Activated CD4-positive, alpha-beta memory T cell treated with anti-CD3 and anti-CD28 coated beads, Interleukin-2, amount 10 ng/mL, durations not matched to agents 7 days and 5 days (primary cell): ENCODE measurements at regions of chr17 and their contacts with region 1.

Region 1: DNA sequence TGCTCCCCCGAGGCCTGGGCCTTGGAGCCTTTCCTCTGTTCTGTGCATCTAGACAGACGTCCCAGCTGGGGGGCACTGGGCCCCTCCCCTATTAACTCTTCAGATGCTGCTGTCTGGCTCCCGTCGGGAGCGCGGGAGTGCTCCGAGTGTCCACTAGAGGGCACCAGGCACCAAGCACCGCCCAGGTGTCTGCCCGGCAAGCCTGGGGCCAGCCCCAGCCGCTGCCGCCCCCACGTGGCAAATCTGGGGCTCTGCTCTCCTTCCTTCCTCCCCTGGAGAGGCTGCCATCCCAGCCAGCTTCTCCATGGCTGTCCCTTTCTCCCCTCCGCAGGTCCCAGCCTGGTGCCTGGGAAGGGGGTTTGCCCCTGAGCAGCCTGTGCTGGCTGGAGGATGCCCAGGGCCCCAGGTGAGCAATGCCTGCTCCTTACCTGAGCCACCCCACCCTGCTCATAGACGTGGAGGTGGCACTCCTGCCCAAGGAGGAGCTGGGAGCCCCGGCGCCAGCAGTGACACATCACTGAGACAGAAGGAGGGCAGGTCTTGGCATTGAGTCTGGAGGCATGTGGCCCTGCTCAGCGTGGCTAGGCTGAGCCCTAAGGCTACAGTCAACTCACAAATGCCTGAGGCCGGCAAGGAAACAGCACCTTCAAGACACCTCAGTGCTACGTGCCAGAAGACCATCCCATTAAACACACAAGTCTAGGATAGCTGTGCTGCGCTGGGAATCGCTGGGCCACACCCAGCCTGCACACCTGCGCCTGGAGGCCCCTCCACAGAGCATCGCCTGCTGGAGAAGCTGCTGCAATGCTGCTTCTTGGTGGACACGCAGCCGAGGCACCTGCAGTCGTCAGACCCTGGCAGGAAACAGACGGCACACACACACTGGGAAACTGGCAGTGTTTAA is 19.7 kb downstream of the TMEM235 start:
- DNase-seq: peak; percentile 89
- H3K4me3 Mint-ChIP-seq: peak overlapping the region; percentile 75
- H3K27ac Mint-ChIP-seq: peak overlapping the region; percentile 79
- H3K4me1 Mint-ChIP-seq: peaks cover 48% of the 10 kb centered on the region
- H3K27me3 Mint-ChIP-seq: peaks cover 4% of the 10 kb centered on the region

Region 2: DNA sequence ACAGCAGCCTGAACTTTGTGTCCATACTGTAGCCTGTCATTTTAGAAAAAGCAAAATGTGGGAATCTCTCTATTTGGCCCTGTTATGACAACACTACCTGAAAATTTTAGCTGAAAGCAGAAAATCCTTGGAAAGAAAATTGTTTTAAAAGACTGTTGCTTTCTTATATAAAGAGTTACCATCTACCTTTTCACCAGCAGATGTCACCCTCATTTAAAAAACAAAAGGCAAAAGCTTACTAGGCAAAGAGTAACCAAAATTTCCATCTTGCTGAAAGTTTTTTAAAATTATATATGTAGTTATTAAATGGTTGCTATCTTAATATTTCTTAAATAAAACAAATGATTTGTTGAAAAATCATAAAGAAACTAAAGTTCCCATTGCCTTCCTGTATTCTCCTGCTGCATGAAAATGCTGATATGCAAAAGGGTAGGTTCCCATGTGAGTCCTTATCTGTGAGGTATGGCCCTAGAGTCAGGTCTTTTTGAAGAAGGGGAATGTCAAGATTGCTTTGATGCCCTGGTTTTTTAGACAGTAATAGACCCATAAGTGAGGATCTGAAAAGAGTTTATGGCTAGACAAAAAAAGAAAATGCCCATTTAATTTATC is 231.7 kb before region 1 on chr17:
- CTCF ChIA-PET with region 1: interaction called, 16 read pairs
- POLR2A ChIA-PET with region 1: interaction called, 4 read pairs
- DNase-seq: no peak
- H3K4me3 Mint-ChIP-seq: peak overlapping the region; percentile 57
- H3K27ac Mint-ChIP-seq: peak overlapping the region; percentile 83
- H3K4me1 Mint-ChIP-seq: peaks cover 26% of the 10 kb centered on the region
- H3K27me3 Mint-ChIP-seq: no peaks in the 10 kb centered on the region

Region 3: DNA sequence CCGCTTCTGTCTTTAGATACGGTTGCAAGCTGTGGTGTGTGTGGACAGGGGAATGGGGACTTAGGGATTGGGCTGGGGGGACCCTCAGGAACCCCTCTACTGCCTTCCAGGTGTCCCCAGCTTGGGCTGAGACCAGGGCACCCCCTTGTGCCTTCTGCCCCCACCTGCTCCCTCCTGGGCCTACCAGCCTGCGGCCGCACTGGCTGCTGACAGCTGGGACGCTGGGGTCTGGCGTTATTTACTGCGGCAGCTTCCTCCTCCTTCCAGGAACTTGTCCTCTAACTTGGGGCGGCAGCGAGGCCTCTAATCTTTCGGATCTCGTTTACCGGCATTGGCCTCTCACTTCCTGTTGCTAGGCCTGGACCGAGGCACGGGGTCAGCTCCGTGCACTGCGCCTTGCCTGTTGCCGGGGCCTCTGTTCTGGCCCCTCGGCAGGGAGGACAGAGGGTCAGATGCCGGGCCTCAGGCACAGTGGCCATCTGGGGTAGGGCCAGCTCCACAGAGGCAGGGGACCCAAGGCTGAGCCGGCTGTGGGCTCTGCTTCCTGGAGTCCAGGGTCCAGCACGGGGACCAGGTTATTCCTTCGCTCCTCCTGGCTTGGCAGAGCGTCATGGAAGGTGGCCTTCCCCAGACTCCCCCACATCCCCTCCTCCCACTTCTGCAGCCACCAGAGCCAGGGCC is 12.1 kb after region 1 on chr17:
- CTCF ChIA-PET with region 1: interaction called, 10 read pairs
- POLR2A ChIA-PET with region 1: interaction called, 6 read pairs
- DNase-seq: peak; percentile 60
- H3K4me3 Mint-ChIP-seq: no peak overlapping the region
- H3K27ac Mint-ChIP-seq: peak overlapping the region; percentile 74
- H3K4me1 Mint-ChIP-seq: peaks cover 44% of the 10 kb centered on the region
- H3K27me3 Mint-ChIP-seq: no peaks in the 10 kb centered on the region

Region 4: GRCh38 chr17:78289802-78290363 is 38.7 kb after region 1 on chr17:
- CTCF ChIA-PET with region 1: interaction called, 22 read pairs
- POLR2A ChIA-PET with region 1: interaction called, 4 read pairs
- DNase-seq: peak; percentile 80
- H3K4me3 Mint-ChIP-seq: no peak overlapping the region
- H3K27ac Mint-ChIP-seq: no peak overlapping the region
- H3K4me1 Mint-ChIP-seq: peaks cover 2% of the 10 kb centered on the region
- H3K27me3 Mint-ChIP-seq: no peaks in the 10 kb centered on the region

Region 5: GRCh38 chr17:78383725-78384471 is 132.8 kb after region 1 on chr17:
- CTCF ChIA-PET with region 1: interaction called, 13 read pairs
- POLR2A ChIA-PET with region 1: interaction called, 4 read pairs
- DNase-seq: peak; percentile 66
- H3K4me3 Mint-ChIP-seq: peak overlapping the region; percentile 68
- H3K27ac Mint-ChIP-seq: peak overlapping the region; percentile 91
- H3K4me1 Mint-ChIP-seq: peaks cover 87% of the 10 kb centered on the region
- H3K27me3 Mint-ChIP-seq: no peaks in the 10 kb centered on the region

Region 6: GRCh38 chr17:78421484-78422266 is 170.5 kb after region 1 on chr17:
- CTCF ChIA-PET with region 1: interaction called, 24 read pairs
- POLR2A ChIA-PET with region 1: interaction called, 3 read pairs
- DNase-seq: peak; percentile 81
- H3K4me3 Mint-ChIP-seq: no peak overlapping the region
- H3K27ac Mint-ChIP-seq: peak overlapping the region; percentile 58
- H3K4me1 Mint-ChIP-seq: peaks cover 54% of the 10 kb centered on the region
- H3K27me3 Mint-ChIP-seq: no peaks in the 10 kb centered on the region